AG04450 (cell line): ENCODE measurements at regions of chr20 and their contacts with region 1.

Region 1: GRCh38 chr20:4956200-4956810 is 45.0 kb downstream of the SLC23A2 start:
- DNase-seq: no peak
- H3K4me3 ChIP-seq: no peak overlapping the region
- H3K27ac ChIP-seq: no peak overlapping the region
- H3K27me3 ChIP-seq: no peaks in the 10 kb centered on the region
- CTCF ChIP-seq: peak; percentile 88

Region 2: DNA sequence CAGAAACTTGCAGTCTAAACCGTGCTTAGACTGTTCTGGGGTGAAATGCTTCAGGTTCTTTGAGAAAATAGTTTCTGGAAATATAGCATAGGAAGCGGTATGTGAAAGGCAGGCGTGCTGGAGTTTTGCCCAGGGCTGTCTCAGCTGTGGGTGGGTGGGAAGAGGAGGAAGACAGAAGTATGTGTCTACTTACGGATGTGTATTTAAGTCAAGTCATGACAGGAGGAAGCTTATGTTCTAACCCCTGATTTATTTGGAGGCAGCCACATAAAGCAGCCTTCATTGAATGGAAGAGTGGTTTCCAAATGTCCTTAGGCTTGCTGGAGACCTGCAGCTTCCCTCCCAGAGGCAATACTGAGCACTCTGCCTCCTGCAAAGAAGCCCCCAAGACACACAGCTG is 580.4 kb before region 1 on chr20:
- CTCF ChIA-PET with region 1: no interaction called
- POLR2A ChIA-PET with region 1: no interaction called
- DNase-seq: peak; percentile 68
- H3K4me3 ChIP-seq: no peak overlapping the region
- H3K27ac ChIP-seq: peak overlapping the region; percentile 62
- H3K27me3 ChIP-seq: peaks cover 2% of the 10 kb centered on the region
- CTCF ChIP-seq: no peak

Region 3: DNA sequence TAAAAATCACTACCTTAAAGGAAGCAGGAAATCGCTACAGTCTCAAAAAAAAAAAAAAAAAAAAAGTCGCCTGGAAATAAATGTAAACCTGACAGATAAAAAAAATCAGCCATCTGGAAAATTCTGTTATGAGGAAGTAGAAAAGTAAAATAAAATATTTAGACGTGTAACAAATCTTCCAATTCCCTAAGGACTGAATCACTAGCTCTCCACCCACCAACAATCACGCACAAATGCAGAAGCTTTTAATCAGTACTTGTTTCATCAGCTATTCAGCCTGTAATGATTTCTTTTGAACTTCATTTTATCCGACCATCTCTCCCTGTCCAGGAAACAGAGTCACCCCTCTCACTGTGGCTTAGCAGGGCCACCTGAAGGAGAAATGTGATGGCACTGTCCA is 14.0 kb before region 1 on chr20:
- CTCF ChIA-PET with region 1: interaction called, 10 read pairs
- POLR2A ChIA-PET with region 1: interaction called, 3 read pairs
- DNase-seq: peak; percentile 83
- H3K4me3 ChIP-seq: no peak overlapping the region
- H3K27ac ChIP-seq: peak overlapping the region; percentile 90
- H3K27me3 ChIP-seq: no peaks in the 10 kb centered on the region
- CTCF ChIP-seq: no peak

Region 4: DNA sequence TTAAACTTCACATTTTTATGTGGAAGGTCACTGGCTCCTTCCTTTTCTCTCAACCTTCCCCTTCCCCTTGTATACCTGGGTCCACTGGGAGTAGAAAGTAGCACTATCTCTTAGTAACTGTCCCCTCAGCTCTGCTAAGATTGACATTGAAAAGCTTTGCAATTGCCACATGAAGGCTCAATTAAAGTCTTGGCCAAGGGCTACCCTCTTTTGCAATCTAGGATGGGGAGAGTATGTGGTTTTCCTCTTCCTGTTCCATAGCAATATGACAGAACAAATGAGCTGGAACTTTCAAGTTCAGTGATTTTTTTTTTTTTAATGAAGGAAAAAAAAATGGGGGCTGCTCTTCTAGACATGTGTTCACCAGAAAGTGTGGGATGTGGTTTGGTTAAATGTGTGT is 323.4 kb after region 1 on chr20:
- CTCF ChIA-PET with region 1: no interaction called
- POLR2A ChIA-PET with region 1: no interaction called
- DNase-seq: no peak
- H3K4me3 ChIP-seq: no peak overlapping the region
- H3K27ac ChIP-seq: no peak overlapping the region
- H3K27me3 ChIP-seq: no peaks in the 10 kb centered on the region
- CTCF ChIP-seq: no peak